ENCODE measurements at regions of chr13 and their contacts with region 1.

Region 1: GRCh38 chr13:41456768-41457588 is at the start of gene RGCC:
- DNase-seq: peak; percentile 83
- H3K4me3 Mint-ChIP-seq: peak within 1 kb of the TSS; percentile 95
- H3K27ac Mint-ChIP-seq: peak within 1 kb of the TSS; percentile 95
- H3K4me1 Mint-ChIP-seq: peaks cover 40% of the 10 kb centered on the region
- H3K27me3 Mint-ChIP-seq: peaks cover 25% of the 10 kb centered on the region
- total RNA-seq, gene RGCC: 76.5 and 79.3 TPM in 2 replicates

Region 2: GRCh38 chr13:40770934-40771618 is 685.9 kb before region 1 on chr13 and contains the start of gene MRPS31:
- intact Hi-C with region 1: loop called (anchors 10 kb)
- DNase-seq: peak; percentile 94
- H3K4me3 Mint-ChIP-seq: peak within 1 kb of the TSS; percentile 89
- H3K27ac Mint-ChIP-seq: peak within 1 kb of the TSS; percentile 90
- H3K4me1 Mint-ChIP-seq: peaks cover 36% of the 10 kb centered on the region
- H3K27me3 Mint-ChIP-seq: no peaks in the 10 kb centered on the region
- total RNA-seq, gene MRPS31: 42.9 and 43.1 TPM in 2 replicates

Region 3: GRCh38 chr13:41034881-41035280 is 422.1 kb before region 1 on chr13:
- intact Hi-C with region 1: no loop called
- DNase-seq: no peak
- H3K4me3 Mint-ChIP-seq: no peak overlapping the region
- H3K27ac Mint-ChIP-seq: no peak overlapping the region
- H3K4me1 Mint-ChIP-seq: peaks cover 21% of the 10 kb centered on the region
- H3K27me3 Mint-ChIP-seq: no peaks in the 10 kb centered on the region

Region 4: DNA sequence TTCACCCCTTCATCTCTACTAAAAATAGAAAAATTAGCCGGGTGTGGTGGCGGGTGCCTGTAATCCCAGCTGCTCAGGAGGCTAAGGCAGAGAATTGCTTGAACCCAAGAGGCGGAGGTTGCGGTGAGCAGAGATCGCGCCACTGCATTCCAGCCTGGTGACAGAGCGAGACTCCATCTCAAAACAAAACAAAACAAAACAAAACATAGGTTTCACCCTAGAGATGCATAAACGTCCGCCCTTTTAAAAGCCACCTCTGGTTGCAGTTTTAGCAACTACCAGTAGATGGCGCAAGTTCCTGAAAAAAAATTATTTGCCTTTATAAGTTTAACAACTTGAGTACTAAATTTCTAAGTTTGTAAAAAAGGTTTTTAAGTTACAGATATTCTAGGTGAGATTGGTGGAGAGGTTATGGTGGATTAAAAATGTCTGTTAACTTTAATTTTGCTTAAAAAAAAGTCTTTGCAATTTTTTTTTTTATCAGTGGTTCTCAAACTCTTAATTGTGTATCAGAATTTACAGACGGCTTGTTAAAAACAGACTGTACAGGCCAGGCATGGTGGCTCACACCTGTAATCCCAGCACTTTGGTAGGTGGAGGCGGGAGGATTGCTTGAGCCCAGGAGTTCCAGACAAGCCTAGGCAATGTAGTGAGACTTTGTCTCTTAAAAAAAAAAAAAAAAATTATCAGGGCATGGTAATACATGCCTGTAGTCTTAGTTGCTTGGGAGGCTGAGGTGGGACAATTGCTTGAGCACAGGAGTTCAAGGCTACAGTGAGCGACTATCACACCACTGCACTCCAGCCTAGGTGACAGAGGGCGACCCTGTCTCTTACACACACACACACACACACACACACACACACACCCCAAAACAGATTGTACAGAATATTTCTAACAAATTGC is 103.8 kb before region 1 on chr13:
- intact Hi-C with region 1: loop called (anchors 2 kb)
- DNase-seq: peak; percentile 53
- H3K4me3 Mint-ChIP-seq: no peak overlapping the region
- H3K27ac Mint-ChIP-seq: peak overlapping the region; percentile 64
- H3K4me1 Mint-ChIP-seq: peaks cover 40% of the 10 kb centered on the region
- H3K27me3 Mint-ChIP-seq: no peaks in the 10 kb centered on the region

Region 5: DNA sequence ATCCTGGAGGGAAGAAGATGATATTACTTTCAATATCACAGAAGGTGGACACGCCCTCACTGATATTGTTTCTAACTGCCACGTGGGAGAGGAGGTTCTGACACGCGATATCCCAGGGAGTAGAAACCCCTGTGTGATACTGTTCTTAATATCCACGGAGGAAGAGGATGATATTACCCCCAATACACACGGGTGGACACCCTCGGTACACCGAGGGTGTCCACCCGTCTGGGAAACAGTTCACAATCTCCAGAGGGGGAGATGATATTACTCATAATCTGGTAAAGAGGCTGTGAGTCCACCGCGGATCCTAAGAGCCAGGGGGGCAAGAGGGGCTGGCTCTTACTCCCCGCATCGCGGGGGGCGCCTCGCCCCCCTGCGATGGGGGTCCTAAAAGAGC is 29.3 kb before region 1 on chr13:
- intact Hi-C with region 1: loop called (anchors 2 kb)
- DNase-seq: no peak
- H3K4me3 Mint-ChIP-seq: no peak overlapping the region
- H3K27ac Mint-ChIP-seq: no peak overlapping the region
- H3K4me1 Mint-ChIP-seq: peaks cover 4% of the 10 kb centered on the region
- H3K27me3 Mint-ChIP-seq: no peaks in the 10 kb centered on the region

Region 6: DNA sequence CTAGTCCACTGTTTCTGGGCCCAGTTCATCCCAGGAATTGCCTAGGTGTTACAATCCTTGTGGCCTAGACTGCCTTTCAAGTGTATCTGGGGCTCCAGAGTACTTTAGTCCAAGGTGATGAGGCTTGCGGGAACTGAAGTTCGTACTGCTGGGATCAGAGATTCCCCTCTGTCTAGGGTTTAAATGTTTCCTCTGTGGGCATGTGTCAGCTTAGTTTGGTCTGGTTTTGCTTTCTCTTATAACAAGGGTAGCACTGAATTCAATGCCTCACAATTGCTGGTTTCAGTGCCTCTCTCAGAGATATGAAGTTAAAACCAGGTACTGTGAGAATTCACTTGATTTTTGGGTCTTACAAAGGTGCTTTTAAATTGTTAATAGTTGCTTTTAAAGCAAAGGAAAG is 31.1 kb after region 1 on chr13:
- intact Hi-C with region 1: no loop called
- DNase-seq: no peak
- H3K4me3 Mint-ChIP-seq: no peak overlapping the region
- H3K27ac Mint-ChIP-seq: no peak overlapping the region
- H3K4me1 Mint-ChIP-seq: peaks cover 26% of the 10 kb centered on the region
- H3K27me3 Mint-ChIP-seq: no peaks in the 10 kb centered on the region

Region 7: DNA sequence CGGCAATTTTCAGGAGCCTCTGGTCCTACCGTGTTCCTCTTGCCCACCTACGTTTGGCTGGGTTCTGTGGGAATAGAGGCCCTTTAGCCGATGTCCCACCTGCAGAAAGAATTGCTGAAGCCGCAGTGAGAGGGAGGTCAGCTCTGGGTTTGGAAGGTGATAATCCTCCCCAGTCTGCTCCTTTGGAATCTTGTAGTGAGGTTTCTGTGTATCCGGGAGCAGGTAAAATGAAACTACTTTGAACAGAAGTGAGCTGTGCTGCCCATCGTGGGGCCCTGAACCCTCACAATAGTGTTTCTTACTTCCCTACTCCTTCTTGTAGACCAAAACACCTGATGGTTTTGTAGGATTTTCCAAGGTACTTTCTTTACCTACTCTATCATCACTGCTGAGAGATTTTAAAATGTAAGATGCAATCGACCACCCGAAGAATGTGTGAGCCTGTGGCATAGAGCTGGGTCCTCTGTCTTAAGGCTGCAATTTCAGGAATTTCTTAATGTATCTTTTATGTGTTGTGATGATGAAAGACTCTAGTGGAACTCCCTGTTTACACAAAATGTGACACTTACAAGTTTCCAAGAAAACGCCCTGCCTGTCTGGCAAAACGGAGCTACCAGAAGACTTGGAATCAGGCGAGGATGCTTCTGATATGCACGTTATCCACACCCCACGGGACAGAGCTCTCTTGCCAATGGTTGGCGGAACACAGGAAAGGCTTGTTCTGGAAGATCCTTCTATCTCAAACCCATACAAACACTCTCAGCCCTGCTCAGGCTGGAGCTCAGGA is 76.5 kb after region 1 on chr13:
- intact Hi-C with region 1: no loop called
- DNase-seq: no peak
- H3K4me3 Mint-ChIP-seq: no peak overlapping the region
- H3K27ac Mint-ChIP-seq: no peak overlapping the region
- H3K4me1 Mint-ChIP-seq: no peaks in the 10 kb centered on the region
- H3K27me3 Mint-ChIP-seq: peaks cover 10% of the 10 kb centered on the region

Region 8: GRCh38 chr13:41652727-41653361 is 195.9 kb after region 1 on chr13:
- intact Hi-C with region 1: loop called (anchors 2 kb)
- DNase-seq: no peak
- H3K4me3 Mint-ChIP-seq: no peak overlapping the region
- H3K27ac Mint-ChIP-seq: no peak overlapping the region
- H3K4me1 Mint-ChIP-seq: peaks cover 6% of the 10 kb centered on the region
- H3K27me3 Mint-ChIP-seq: no peaks in the 10 kb centered on the region

Region 9: GRCh38 chr13:41700790-41701310 is 243.9 kb after region 1 on chr13:
- intact Hi-C with region 1: no loop called
- DNase-seq: no peak
- H3K4me3 Mint-ChIP-seq: no peak overlapping the region
- H3K27ac Mint-ChIP-seq: no peak overlapping the region
- H3K4me1 Mint-ChIP-seq: peaks cover 5% of the 10 kb centered on the region
- H3K27me3 Mint-ChIP-seq: no peaks in the 10 kb centered on the region

Region 10: GRCh38 chr13:42048682-42049453 is 591.9 kb after region 1 on chr13:
- intact Hi-C with region 1: loop called (anchors 5 kb)
- DNase-seq: peak; percentile 59
- H3K4me3 Mint-ChIP-seq: peak overlapping the region; percentile 87
- H3K27ac Mint-ChIP-seq: peak overlapping the region; percentile 75
- H3K4me1 Mint-ChIP-seq: peaks cover 27% of the 10 kb centered on the region
- H3K27me3 Mint-ChIP-seq: peaks cover 3% of the 10 kb centered on the region

Region 11: DNA sequence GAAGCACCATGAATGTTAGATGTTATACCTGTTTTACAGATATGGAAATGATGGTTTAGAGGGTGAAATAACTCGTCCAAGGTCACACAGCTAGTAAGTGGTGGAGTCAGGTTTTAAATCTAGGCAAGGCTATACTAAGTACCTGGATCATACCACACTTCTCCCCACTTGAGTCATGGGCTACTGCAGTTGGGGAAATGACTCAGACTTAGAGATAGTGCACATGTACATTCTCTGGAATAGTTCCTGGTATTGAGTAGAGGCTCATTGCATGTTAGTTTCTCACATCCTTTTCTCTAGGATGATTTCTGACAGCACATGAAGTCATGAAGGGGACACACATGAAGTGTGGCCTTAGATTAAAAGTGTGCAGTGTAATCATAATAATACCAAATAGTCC is 1040.8 kb after region 1 on chr13:
- intact Hi-C with region 1: loop called (anchors 10 kb)
- DNase-seq: no peak
- H3K4me3 Mint-ChIP-seq: no peak overlapping the region
- H3K27ac Mint-ChIP-seq: peak overlapping the region; percentile 83
- H3K4me1 Mint-ChIP-seq: peaks cover 65% of the 10 kb centered on the region
- H3K27me3 Mint-ChIP-seq: no peaks in the 10 kb centered on the region